PC-9 (cell line): ENCODE measurements at regions of chr17 and their contacts with region 1.

Region 1: DNA sequence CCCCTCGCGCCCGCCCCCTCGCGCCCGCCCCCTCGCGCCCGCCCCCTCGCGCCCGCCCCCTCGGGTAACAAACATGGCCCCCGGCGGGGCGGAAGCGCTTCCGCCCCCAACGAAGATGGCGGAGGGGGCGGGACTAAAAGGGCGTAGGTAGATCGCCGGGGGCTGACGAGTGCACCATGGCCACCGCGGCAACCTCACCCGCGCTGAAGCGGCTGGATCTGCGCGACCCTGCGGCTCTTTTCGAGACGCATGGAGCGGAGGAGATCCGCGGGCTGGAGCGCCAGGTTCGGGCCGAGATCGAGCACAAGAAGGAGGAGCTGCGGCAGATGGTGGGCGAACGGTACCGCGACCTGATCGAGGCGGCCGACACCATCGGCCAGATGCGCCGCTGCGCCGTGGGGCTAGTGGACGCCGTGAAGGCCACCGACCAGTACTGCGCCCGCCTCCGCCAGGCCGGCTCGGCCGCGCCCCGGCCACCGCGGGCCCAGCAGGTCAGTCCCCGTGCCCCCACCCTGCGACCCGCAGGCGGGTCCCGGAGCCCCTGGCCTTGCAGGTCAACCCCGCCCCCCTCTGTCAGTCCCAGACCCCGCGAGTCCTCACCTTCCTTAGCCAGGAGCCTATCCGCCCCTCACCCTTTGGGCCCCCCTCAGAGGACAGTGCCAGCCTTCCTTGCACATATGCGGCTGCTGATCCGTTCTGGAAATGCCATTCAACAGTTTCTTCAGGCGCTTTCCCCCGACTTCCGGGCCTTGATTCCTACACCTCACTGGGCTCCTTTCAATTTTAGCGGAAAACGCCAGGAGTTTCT is at the start of gene COG1:
- DNase-seq: peak; percentile 55 to 67
- H3K4me3 ChIP-seq: peak within 1 kb of the TSS; percentile 97
- H3K27ac ChIP-seq: peak within 1 kb of the TSS; percentile 77
- H3K4me1 ChIP-seq: 0 out of 2 replicates have a peak, but pooled peaks cover 4% of the 10 kb centered on the region
- H3K27me3 ChIP-seq: no peaks in the 10 kb centered on the region
- CTCF ChIP-seq: no peak
- total RNA-seq, gene COG1: 24.8 and 25.6 TPM in 2 replicates

Region 2: GRCh38 chr17:71900621-71901229 is 1292.4 kb before region 1 on chr17:
- CTCF ChIA-PET with region 1: no interaction called
- POLR2A ChIA-PET with region 1: no interaction called
- intact Hi-C with region 1: loop called (anchors 5 kb)
- DNase-seq: peak; percentile 65 to 93
- H3K4me3 ChIP-seq: peak overlapping the region; percentile 35; the same call in 1 of the 2 replicates
- H3K27ac ChIP-seq: peak overlapping the region; percentile 91
- H3K4me1 ChIP-seq: peaks cover 46% of the 10 kb centered on the region
- H3K27me3 ChIP-seq: no peaks in the 10 kb centered on the region
- CTCF ChIP-seq: no peak

Region 3: DNA sequence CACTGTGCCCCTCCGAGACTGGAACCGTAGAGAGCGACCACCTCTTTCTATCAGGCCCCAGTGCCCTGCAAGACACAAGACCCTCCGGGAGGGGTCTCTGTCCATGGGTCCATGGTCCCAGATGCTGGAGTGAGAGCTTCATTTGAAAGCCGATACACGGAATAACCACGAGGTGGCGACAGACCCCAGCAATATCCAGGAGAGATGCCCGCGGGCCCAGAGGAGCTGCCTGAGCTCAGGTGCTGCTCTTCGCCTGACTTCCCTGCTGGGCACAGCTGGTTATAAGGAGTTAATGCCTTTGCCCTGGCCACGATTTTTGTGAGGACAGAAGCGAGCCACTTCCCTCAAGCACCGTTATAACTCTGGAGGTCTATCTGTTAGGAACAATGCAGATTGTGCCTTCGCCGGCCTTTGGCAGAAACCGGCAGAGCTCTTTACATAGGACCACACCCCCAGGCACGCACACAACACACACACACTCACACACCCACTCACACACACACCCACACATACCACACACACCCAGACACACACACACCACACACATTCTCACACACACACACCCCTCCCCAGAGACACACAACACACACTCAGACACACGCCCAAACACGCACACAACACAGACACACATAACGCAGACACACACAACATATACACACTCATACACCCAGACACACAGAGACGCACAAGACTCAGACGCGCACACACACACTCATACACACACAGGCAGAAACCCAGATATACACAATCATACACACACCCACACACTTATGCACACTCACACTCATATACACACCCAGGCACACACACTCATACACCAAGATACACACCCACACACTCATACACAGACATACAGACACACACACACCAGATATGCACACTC is 635.9 kb before region 1 on chr17:
- CTCF ChIA-PET with region 1: interaction called, 3 read pairs
- POLR2A ChIA-PET with region 1: no interaction called
- intact Hi-C with region 1: loop called (anchors 1 kb)
- DNase-seq: peak; percentile 47 to 61
- H3K4me3 ChIP-seq: no peak overlapping the region
- H3K27ac ChIP-seq: no peak overlapping the region
- H3K4me1 ChIP-seq: peaks cover 14% of the 10 kb centered on the region; the same call in 1 of the 2 replicates
- H3K27me3 ChIP-seq: no peaks in the 10 kb centered on the region
- CTCF ChIP-seq: peak; percentile 85

Region 4: GRCh38 chr17:72985881-72986720 is 207.0 kb before region 1 on chr17:
- CTCF ChIA-PET with region 1: no interaction called
- POLR2A ChIA-PET with region 1: no interaction called
- intact Hi-C with region 1: loop called (anchors 10 kb)
- DNase-seq: peak in 1 of 2 experiments; percentile 47
- H3K4me3 ChIP-seq: no peak overlapping the region
- H3K27ac ChIP-seq: peak overlapping the region; percentile 89
- H3K4me1 ChIP-seq: peaks cover 28% of the 10 kb centered on the region
- H3K27me3 ChIP-seq: no peaks in the 10 kb centered on the region
- CTCF ChIP-seq: peak; percentile 90

Region 5: DNA sequence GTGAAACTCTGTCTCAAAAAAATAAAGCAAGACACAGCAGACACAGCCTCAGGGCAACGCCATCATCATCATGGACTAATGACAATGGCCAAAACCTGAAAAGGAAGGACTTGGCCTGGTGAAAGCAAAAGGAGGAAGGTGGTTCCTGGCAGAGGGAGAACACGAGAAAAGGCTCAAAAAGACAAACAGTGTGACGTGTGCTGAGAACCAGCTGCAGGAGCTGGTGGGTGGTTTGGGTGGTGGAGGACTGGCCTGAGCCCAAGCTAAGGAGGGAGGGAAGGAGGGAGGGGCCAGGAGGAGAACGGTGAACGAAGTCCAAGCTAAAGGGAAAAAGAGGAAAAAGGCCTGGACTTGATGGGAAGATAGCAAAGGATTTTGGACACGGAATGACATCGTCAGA is 185.7 kb before region 1 on chr17:
- CTCF ChIA-PET with region 1: no interaction called
- POLR2A ChIA-PET with region 1: no interaction called
- intact Hi-C with region 1: loop called (anchors 5 kb)
- DNase-seq: no peak
- H3K4me3 ChIP-seq: no peak overlapping the region
- H3K27ac ChIP-seq: no peak overlapping the region
- H3K4me1 ChIP-seq: peaks cover 9% of the 10 kb centered on the region
- H3K27me3 ChIP-seq: no peaks in the 10 kb centered on the region
- CTCF ChIP-seq: no peak

Region 6: GRCh38 chr17:73231841-73232586 is 38.9 kb after region 1 on chr17:
- CTCF ChIA-PET with region 1: no interaction called
- POLR2A ChIA-PET with region 1: interaction called, 3 read pairs
- intact Hi-C with region 1: loop called (anchors 2 kb)
- DNase-seq: peak; percentile 81 to 95
- H3K4me3 ChIP-seq: peak overlapping the region; percentile 97
- H3K27ac ChIP-seq: peak overlapping the region; percentile 29
- H3K4me1 ChIP-seq: peaks cover 43% of the 10 kb centered on the region
- H3K27me3 ChIP-seq: no peaks in the 10 kb centered on the region
- CTCF ChIP-seq: peak; percentile 61

Region 7: DNA sequence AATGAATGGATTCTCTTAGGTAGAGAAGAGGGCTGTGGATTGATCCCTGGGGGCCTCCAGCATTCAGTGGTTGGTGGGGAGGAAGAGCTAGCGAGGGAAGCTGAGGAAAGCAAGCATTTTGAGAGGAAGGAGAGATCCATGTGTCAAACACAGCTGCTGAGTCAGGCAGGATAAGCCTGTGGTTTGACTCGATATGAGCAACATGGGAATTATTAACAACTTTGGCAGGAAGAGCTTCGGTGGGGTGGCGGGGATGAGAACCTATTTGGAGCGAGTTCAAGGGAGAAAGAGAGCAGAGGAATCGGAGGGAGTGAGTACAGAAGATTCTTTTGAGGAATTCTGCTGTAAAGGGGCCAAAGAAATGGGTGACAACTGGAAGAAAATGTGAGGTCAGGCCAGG is 178.2 kb after region 1 on chr17:
- CTCF ChIA-PET with region 1: interaction called, 4 read pairs
- POLR2A ChIA-PET with region 1: no interaction called
- intact Hi-C with region 1: loop called (anchors 1 kb)
- DNase-seq: no peak
- H3K4me3 ChIP-seq: no peak overlapping the region
- H3K27ac ChIP-seq: no peak overlapping the region
- H3K4me1 ChIP-seq: no peaks in the 10 kb centered on the region
- H3K27me3 ChIP-seq: peaks cover 32% of the 10 kb centered on the region
- CTCF ChIP-seq: no peak